Activated T-helper 1 cell treated with anti-CD3 and anti-CD28 coated beads, Interleukin-12 subunit alpha, Interleukin-12 subunit beta, Interleukin-2, Interleukin-4 antibody, amounts not matched to agents 30 ng/mL and 10 ng/mL and 1 ng/mL, durations not matched to agents 14 hours and 24 hours and 36 hours (primary cell): ENCODE measurements at regions of chr13 and their contacts with region 1.

Region 1: DNA sequence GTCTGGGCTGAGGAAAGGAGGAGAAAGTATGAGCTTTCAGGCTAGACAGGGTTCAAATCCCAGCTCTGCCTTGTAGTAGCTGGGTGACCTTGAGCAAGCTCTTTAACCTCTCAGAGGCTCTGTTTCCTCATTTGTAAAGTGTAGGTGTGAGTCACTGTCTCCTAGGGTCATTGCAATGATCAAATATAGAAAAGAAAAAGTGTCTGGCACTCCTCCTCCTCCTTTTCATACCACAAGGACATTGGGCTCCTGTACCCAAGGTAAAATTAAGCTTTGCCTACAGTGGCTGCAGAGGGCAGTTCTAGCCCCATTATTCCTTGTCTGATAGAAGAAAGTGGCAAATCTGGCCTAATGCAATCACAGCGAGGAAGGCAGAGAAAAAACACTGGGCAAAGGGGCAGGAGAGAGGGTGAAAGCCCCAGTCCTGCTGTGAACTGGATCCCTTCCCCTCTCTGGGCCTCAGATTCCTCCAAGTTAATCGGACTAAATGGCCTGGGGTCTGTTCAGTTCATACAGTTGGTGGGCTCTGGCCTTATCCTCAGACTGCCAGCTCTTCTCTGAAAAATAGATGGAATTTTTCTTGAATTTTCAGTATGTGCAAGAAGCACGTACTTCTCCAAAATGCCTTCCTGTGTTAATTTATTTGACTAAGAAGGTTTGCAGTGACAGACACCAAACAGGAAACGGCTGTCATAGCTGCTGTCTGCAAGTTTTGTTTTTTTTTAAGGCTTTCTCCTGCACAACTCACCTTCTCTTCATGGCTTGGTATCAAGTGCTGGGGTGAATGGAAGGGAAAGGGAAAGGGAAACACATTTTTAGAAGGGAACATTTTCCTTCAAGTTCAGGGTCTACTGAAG is 35.3 kb downstream of the RGCC start:
- DNase-seq: peak; percentile 22
- H3K4me3 Mint-ChIP-seq: peak overlapping the region; percentile 60
- H3K27ac Mint-ChIP-seq: peak overlapping the region; percentile 76
- H3K4me1 Mint-ChIP-seq: peaks cover 81% of the 10 kb centered on the region
- H3K27me3 Mint-ChIP-seq: no peaks in the 10 kb centered on the region

Region 2: DNA sequence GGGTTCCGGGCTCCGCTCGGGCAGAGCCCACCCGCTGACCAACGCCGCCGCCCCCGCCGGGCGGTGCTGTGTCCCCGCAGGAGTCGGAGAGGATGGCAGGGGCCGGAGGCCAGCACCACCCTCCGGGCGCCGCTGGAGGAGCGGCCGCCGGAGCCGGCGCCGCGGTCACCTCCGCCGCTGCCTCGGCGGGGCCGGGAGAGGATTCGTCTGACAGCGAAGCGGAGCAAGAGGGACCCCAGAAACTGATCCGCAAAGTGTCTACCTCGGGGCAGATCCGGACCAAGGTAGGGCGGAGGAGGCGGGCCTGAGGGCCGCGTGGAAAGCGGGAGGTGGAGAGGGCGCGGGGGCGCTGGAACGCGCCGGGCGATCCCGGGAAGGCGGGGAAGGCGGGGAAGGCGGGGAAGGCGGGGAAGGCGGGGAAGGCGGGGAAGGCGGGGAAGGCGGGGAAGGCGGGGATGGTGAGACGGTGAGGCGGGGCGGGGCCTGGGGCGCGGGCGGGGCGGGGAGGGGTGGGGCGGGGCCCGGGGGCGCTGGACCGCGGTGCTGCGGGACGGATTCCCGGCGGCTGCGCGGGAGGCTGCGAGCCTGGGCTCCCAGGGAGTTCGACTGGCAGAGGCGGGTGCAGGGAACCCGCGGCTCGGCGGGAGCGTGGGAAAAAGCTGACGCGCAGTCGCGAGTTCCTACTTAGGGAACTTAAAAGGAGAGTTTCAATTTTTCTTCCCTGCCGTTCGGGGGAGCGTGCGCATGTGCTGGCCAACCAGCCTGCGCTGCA is 556.2 kb after region 1 on chr13:
- intact Hi-C with region 1: loop called (anchors 1 kb)
- DNase-seq: peak; percentile 59
- H3K4me3 Mint-ChIP-seq: peak overlapping the region; percentile 88
- H3K27ac Mint-ChIP-seq: peak overlapping the region; percentile 80
- H3K4me1 Mint-ChIP-seq: peaks cover 25% of the 10 kb centered on the region
- H3K27me3 Mint-ChIP-seq: peaks cover 16% of the 10 kb centered on the region